HCT116 (cell line): ENCODE measurements at regions of chr1 and their contacts with region 1.

Region 1: DNA sequence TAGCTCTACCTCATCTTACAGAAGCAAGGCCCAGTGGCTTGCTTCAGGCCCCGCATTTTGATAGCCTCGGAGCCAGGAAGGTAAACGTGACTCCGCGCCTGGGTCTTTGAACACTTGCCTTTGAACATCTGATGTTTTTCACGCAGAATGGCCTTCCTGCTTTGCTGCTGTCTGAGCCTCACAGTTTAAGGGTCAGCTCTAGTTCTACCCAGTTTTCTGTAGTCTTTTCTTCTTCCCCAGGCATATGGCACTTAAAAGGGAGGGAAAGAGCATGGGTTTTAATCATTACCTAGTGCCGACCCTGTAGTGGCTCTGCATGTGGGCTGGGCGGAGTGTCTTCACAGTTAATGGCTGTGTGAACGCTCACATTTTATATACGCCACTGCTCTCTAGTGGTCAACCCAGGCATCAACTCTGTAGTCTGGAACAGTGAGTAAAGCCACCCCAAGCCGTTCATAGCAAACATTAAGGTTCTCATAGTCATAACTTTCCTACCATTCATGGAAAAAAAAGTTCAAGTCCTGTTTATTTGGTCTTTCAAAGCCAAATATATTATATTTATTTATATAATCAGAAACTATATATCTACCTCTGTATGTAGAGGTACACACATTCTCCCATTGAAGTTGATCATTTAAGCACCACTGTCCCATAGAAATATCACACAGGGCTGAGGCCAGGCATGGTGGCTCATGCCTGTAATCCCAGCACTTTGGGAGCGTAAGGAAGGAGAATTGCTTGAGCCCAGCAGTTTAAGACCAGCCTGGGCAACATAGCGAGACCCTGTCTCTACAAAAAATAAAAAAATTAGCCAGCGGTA is 78.1 kb downstream of the IER5 start:
- DNase-seq: peak; percentile 68
- ATAC-seq: peak; percentile 100
- H3K4me3 ChIP-seq: no peak overlapping the region
- H3K27ac ChIP-seq: no peak overlapping the region
- H3K4me1 ChIP-seq: peaks cover 0 to 4% of the 10 kb centered on the region in 2 experiments; a peak in 1 of 4 replicates
- H3K27me3 ChIP-seq: no peaks in the 10 kb centered on the region
- CTCF ChIP-seq: peak; percentile 79 to 87 (median 85)
- POLR2A ChIP-seq: no peak
- RAD21 ChIP-seq: peak; percentile 95

Region 2: DNA sequence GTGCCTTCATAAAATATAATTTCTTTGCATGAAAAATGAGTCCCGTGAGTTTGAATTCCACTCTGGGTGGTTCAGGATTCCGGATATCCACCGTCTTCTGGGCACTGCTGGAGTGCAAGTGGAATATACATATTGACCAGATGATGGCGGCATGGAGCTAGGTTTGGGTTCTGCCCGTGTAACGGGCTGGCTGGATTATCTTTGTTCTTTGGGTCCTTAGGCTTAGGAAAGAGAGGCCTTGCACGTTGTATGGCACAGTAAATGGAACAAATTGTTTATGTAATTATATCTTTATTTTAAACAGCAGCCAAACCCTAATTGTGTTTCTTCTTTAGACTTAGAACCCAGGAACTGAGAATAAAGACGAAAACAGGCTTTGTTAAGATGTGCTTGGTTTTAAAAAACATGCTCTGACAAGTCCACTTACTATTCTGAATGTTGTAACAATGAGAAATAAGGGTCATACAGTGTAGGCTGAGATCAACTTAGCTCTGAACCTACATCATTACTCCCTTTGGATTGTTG is 650.7 kb before region 1 on chr1:
- CTCF ChIA-PET with region 1: interaction called, 7 read pairs
- POLR2A ChIA-PET with region 1: no interaction called
- RAD21 ChIA-PET with region 1: no interaction called
- intact Hi-C with region 1: loop called (anchors 1 kb)
- DNase-seq: peak; percentile 73
- ATAC-seq: peak; percentile 99
- H3K4me3 ChIP-seq: no peak overlapping the region
- H3K27ac ChIP-seq: peak overlapping the region; percentile 11; the same call in 1 of the 2 replicates
- H3K4me1 ChIP-seq: peaks cover 4 to 8% of the 10 kb centered on the region in 2 experiments; a peak in 2 of 4 replicates
- H3K27me3 ChIP-seq: no peaks in the 10 kb centered on the region
- CTCF ChIP-seq: peak; percentile 64 to 83 (median 80)
- POLR2A ChIP-seq: no peak
- RAD21 ChIP-seq: peak; percentile 94

Region 3: GRCh38 chr1:180533266-180533987 is 633.2 kb before region 1 on chr1:
- CTCF ChIA-PET with region 1: no interaction called
- POLR2A ChIA-PET with region 1: no interaction called
- RAD21 ChIA-PET with region 1: no interaction called
- intact Hi-C with region 1: loop called (anchors 2 kb)
- DNase-seq: peak; percentile 56
- ATAC-seq: peak; percentile 97
- H3K4me3 ChIP-seq: no peak overlapping the region
- H3K27ac ChIP-seq: no peak overlapping the region
- H3K4me1 ChIP-seq: 0 out of 4 replicates have a peak, but pooled peaks cover 0 to 3% of the 10 kb centered on the region in 2 experiments
- H3K27me3 ChIP-seq: no peaks in the 10 kb centered on the region
- CTCF ChIP-seq: peak; percentile 84 to 94 (median 91)
- POLR2A ChIP-seq: no peak
- RAD21 ChIP-seq: peak; percentile 94

Region 4: DNA sequence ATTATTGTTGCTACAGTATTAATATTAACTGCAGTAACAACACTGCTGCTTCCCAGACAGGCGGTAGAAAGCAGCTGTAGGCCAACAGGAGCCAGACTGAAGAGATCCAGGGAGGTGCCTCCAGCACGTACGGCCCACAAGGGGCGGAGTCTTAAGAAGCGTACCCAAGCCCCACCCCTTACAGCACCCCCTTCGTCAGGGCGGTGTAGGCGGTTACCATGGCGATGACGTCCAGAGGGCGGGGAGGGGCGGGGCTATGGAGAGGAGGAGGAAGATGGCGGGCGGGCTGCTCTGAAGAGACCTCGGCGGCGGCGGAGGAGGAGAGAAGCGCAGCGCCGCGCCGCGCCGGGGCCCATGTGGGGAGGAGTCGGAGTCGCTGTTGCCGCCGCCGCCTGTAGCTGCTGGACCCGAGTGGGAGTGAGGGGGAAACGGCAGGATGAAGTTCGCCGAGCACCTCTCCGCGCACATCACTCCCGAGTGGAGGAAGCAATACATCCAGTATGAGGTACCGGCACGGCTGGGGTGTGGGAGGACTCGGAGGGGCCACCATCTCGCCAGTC is 534.7 kb before region 1 on chr1 and contains the start of gene XPR1:
- CTCF ChIA-PET with region 1: no interaction called
- POLR2A ChIA-PET with region 1: no interaction called
- RAD21 ChIA-PET with region 1: no interaction called
- intact Hi-C with region 1: loop called (anchors 10 kb)
- DNase-seq: peak; percentile 97
- ATAC-seq: peak; percentile 98
- H3K4me3 ChIP-seq: peak within 1 kb of the TSS; percentile 67 to 74
- H3K27ac ChIP-seq: peak within 1 kb of the TSS; percentile 68
- H3K4me1 ChIP-seq: peaks cover 10 to 17% of the 10 kb centered on the region in 2 experiments; a peak in 3 of 4 replicates
- H3K27me3 ChIP-seq: no peaks in the 10 kb centered on the region
- CTCF ChIP-seq: peak in 2 of 3 experiments; percentile 10 to 21; a peak in 3 of 6 replicates
- POLR2A ChIP-seq: peak; percentile 66
- RAD21 ChIP-seq: no peak
- total RNA-seq, gene XPR1: 19.9 TPM

Region 5: DNA sequence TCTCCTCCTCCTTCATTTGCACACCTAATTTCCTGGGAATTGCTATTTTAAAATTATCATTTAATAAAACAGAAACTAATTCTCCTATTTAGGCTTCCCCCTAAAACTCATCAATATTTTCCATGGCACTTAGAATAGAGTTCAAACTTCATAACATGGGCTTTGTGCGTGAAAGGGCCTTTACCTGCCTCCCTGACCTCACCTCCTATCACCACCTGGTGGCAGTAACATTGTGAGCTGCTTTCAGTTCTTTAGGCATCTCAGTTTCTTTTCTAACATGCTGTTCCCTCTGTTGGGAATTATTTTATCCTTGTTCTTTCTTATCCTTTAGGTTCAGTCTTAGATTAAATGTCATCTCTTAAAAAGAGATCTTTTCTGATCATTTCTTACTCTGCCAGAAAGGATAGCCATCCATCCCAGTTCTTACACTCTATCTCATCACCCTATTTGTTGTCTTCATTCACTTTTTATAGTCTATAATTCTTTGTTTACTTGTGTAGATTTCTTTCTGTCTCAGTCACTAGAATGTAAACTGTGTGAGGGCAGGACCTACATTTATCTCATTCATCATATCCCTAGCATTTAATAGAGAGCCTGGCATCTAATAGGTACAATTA is 387.7 kb before region 1 on chr1:
- CTCF ChIA-PET with region 1: no interaction called
- POLR2A ChIA-PET with region 1: no interaction called
- RAD21 ChIA-PET with region 1: no interaction called
- intact Hi-C with region 1: loop called (anchors 5 kb)
- DNase-seq: peak; percentile 10
- ATAC-seq: peak; percentile 80
- H3K4me3 ChIP-seq: no peak overlapping the region
- H3K27ac ChIP-seq: no peak overlapping the region
- H3K4me1 ChIP-seq: no peaks in the 10 kb centered on the region
- H3K27me3 ChIP-seq: no peaks in the 10 kb centered on the region
- CTCF ChIP-seq: peak; percentile 44 to 73 (median 72)
- POLR2A ChIP-seq: no peak
- RAD21 ChIP-seq: peak; percentile 58

Region 6: DNA sequence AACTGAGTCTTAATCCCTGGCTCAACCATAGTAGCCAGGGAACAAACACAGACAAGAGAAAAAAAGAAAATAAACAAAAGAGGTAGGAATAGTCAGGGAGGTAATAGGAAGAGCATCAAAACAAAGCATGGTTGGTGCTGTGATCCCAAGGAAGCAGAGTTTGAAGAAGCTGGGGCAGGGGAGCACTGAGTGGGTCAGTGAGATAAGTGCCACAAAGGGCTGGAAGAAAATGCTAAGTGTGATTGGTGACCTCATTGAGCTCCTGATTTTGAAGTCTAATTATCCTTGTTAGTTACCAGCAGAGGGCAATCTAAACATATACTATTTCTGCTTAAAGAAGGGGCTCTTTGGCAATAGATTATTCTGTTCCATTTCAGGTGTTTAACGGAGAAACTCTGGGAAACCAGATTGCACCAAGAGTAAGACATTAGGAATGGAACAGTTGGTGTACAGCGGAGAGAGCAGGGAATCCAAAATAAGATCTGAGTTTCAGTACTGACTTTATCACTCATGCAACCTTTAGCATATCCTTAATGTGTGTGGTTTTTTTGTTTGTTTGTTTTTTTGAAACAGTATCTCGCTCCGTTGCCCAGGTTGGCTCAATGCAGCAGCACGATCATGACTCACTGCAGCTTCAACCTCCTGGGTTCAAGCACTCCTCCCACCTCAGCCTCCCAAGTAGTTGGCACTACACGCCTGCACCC is 284.6 kb before region 1 on chr1:
- CTCF ChIA-PET with region 1: interaction called, 30 read pairs
- POLR2A ChIA-PET with region 1: no interaction called
- RAD21 ChIA-PET with region 1: interaction called in 1 of 2 experiments, 4 read pairs
- intact Hi-C with region 1: loop called (anchors 1 kb)
- DNase-seq: peak; percentile 21
- ATAC-seq: peak; percentile 78
- H3K4me3 ChIP-seq: no peak overlapping the region
- H3K27ac ChIP-seq: no peak overlapping the region
- H3K4me1 ChIP-seq: peaks cover 0 to 4% of the 10 kb centered on the region in 2 experiments; a peak in 1 of 4 replicates
- H3K27me3 ChIP-seq: no peaks in the 10 kb centered on the region
- CTCF ChIP-seq: peak; percentile 21 to 68 (median 58); a peak in 4 of 6 replicates
- POLR2A ChIP-seq: no peak
- RAD21 ChIP-seq: peak; percentile 81